ENCODE measurements at regions of chr7 and their contacts with region 1.

Region 1: DNA sequence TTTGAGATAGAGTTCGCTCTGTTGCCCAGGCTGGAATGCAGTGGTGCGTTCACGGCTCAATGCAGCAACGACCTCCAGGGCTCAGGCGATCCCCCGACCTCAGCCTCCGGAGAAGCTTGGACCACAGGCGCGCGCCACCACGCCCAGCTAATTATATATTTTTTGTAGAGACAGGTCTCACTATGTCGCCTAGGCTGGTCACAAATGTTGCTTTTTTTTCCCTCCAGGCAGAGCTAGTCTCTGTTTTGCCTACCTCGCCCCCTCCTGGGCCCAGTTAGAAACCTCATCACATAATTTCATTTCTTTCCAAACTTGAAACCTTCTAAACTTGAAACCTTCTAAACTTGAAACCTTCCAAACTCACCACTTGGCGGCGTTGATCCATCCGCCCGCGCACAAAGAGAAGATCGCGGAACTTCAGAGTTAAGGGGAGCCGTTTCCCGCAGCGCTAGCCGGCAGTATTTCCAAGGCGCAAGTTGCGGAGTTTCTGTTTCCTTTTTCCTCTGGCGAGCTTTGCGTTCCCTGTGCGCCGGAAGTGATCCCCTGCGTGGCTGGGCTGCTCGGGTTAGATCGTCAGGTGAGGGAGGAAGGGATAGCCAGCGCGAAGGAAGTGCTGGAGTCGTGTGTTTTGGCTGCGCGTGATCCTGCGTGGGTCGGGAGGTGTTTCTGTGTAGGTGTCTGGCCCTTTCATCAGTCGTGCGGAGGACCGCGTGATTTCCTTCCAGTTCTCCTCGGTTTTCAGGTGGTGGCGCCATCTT is at the start of gene SSBP1:
- DNase-seq: peak; percentile 83 to 92
- ATAC-seq: peak; percentile 94 to 98 (median 96)
- H3K4me3 ChIP-seq: peak within 1 kb of the TSS; percentile 61 to 88 (median 77)
- H3K27ac ChIP-seq: peak within 1 kb of the TSS in 9 of 10 donors; percentile 70 to 89 (median 80)
- H3K4me1 ChIP-seq: peaks cover 6 to 35% (median 26%) of the 10 kb centered on the region in 9 donors
- H3K27me3 ChIP-seq: no peaks in the 10 kb centered on the region
- CTCF ChIP-seq: peak; percentile 65 to 89 (median 79)
- total RNA-seq, gene SSBP1: 97.4 to 122 (median 107) TPM

Region 2: DNA sequence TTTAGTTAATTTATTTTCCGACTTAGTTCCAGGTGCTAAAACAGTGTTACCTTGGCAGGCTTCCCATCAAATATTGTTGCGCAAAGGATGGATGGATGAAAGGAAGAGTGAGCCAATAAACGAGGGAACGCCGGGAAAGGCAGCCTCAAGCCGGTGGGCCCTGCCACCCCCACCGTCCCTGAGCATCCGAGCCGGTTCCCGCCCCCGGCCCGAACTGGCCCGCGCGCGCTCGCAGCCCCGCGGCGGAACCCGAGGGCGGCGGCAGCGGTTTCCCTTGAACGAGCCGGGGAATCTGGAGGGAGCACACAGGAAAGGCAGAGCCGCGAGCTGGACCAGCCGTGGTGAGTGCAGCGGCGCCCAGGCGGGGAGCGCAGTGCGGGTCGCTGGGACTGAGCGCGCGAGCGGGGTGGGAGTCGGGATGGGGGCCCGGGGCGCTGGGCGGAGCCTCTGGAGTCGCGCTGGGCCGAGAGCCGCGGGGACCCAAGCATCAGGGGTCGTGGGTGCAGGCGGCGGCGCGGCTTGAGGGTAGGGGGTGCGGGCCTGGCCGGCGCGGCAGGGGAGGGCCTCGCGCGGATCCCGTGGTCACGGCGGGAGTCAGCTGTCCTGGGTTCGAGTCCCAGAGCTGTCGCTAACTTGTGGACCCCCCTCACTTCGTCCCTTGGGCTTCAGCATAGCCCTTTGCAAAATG is 186.8 kb before region 1 on chr7 and contains the start of gene AGK:
- intact Hi-C with region 1: loop called in 1 of 10 experiments (anchors 2 kb)
- DNase-seq: peak; percentile 78 to 79
- ATAC-seq: peak; percentile 84 to 97 (median 93)
- H3K4me3 ChIP-seq: peak within 1 kb of the TSS; percentile 85 to 100 (median 97)
- H3K27ac ChIP-seq: peak within 1 kb of the TSS; percentile 20 to 90 (median 86)
- H3K4me1 ChIP-seq: peaks cover 4 to 26% (median 17%) of the 10 kb centered on the region in 9 donors
- H3K27me3 ChIP-seq: no peaks in the 10 kb centered on the region
- CTCF ChIP-seq: peak in 1 of 9 donors; percentile 6
- total RNA-seq, gene AGK: 27.1 to 45.1 (median 39.7) TPM

Region 3: DNA sequence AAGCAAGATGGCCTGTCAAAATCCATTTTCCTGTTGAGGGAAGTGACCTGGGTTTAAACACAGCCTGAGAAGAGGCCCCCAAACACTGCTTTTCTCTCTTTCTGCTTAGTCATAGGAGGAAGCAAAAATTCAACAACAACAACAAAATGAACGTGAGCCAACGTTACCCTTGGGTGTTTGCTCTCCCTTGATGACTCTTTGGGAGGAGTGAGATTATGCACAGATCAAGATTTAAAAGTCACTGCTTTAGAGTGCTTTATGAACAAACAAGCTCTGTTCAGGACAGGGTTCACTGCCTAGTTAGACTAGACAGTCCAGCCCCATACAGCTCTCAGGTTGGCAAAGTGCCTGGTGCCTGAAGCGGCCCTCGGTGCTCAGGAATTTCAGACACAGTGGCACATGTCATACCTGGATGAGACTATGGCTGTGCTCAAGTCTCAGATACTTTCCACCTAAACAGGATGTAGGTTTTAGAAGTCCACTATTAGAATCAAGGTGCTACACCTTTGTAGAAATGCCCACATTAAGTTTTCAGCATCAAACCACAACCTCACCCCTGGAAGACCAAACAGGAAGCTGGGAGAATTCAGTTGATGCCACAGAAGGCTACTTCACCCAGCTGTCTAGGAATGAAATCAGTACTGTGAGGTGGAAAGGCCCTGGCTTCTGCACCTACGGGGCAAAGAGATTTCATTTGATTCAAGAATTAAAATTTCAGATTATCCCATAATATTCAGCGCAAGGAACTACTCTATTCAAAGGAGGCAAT is 74.7 kb before region 1 on chr7:
- intact Hi-C with region 1: loop called in 4 of 10 experiments (anchors 5 to 10 kb)
- DNase-seq: no peak
- ATAC-seq: peak in 6 of 8 donors; percentile 25 to 39 (median 32)
- H3K4me3 ChIP-seq: no peak overlapping the region
- H3K27ac ChIP-seq: peak overlapping the region in 2 of 10 donors; percentile 25 to 75
- H3K4me1 ChIP-seq: peaks cover 0 to 48% (median 0%) of the 10 kb centered on the region in 9 donors
- H3K27me3 ChIP-seq: no peaks in the 10 kb centered on the region
- CTCF ChIP-seq: no peak

Region 4: DNA sequence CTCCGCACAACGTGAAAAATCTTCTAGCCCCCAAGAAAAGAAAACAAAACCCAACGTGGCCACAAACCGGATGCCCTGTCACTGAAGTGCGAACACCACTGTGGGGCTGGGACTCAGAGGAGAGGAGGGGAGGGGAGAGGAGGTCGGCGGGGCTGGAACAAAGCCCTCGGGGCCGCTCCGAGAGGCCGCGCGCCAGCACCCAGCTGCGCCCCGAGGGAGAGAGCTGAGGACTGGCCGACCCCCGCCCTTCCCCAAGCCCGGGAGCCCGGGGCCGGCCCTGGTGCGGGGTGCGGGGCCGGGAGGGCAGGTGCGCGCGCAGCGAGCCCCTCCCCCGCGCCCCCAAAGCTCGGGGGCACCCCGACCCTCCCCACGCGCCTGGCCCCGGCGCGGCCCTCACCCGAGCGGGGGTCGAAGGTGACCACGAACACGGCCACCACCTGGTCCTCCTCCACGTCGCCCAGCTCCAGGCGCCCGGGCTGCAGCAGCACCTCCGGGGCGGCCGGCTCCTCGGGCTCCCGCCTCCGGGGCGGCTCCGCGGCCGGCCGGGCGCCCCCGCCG is 36.4 kb before region 1 on chr7:
- intact Hi-C with region 1: loop called in 2 of 10 experiments (anchors 5 kb)
- DNase-seq: peak; percentile 45 to 46
- ATAC-seq: peak; percentile 53 to 84 (median 71)
- H3K4me3 ChIP-seq: peak overlapping the region; percentile 70 to 92 (median 84)
- H3K27ac ChIP-seq: peak overlapping the region; percentile 71 to 91 (median 86)
- H3K4me1 ChIP-seq: peaks cover 0 to 49% (median 32%) of the 10 kb centered on the region in 9 donors
- H3K27me3 ChIP-seq: no peaks in the 10 kb centered on the region
- CTCF ChIP-seq: no peak